ENCODE measurements at regions of chr19 and their contacts with region 1.

Region 1: GRCh38 chr19:40662921-40663694 is 27.3 kb downstream of the NUMBL start:
- DNase-seq: peak; percentile 92
- CTCF ChIP-seq: peak; percentile 99

Region 2: DNA sequence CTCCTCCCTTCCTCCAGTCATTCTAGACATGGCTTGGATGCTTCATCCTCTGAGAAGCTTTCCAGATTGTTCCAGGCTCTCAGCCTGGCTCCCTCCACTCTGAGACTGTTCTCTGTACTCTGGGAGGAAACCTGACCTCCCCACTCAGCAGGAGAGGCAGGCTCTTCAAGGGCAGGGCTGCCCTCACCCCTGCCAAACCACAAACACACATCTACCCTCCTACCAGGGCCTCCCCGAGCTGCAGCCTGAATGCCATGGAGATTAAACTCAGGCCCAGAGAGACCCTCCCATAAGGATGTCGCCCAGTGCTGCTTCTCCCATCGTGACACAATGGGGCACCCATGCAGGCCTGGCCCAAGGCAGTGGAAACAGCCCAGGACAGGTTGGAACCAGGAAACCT is 11.2 kb after region 1 on chr19:
- CTCF ChIA-PET with region 1: interaction called, 14 read pairs
- POLR2A ChIA-PET with region 1: no interaction called
- DNase-seq: no peak
- CTCF ChIP-seq: no peak

Region 3: DNA sequence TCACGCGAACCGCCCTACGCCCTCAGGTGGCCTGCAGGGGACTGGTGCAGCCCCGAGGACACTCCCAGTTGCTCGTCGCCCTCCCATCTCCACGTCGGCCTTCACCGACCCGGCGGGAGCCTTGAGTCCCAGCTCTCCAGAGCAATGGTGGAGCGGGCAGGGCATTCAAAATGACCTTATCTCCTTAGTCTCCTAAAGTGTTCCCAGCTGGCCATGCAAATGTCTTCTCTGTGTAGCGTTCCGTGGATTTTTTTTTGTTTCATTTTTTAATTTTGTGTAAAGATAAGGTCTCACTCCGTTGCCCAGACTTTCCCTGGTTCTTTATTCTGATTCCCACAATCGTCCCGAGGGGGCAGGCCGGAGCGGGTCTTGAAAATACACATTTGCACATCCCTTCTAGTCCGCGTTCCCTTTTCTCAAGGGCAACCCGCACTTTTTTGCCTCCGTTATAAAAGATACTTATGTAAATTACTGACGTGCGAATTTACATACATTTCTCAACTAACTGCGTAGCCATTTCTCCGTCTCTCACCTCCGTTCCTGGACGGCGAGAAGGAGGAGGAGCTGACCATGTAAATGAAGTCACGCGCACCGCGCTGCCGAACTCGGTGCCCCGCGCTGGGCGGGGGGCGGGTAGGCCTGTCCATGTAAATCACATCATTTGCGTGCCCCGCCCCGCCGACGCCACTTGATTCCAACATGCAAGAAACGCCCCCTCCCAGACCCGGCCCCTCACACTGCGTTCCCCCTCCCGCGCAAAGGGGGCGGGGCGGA is 135.3 kb after region 1 on chr19:
- CTCF ChIA-PET with region 1: interaction called, 11 read pairs
- POLR2A ChIA-PET with region 1: no interaction called
- DNase-seq: peak; percentile 97
- CTCF ChIP-seq: peak; percentile 61

Region 4: DNA sequence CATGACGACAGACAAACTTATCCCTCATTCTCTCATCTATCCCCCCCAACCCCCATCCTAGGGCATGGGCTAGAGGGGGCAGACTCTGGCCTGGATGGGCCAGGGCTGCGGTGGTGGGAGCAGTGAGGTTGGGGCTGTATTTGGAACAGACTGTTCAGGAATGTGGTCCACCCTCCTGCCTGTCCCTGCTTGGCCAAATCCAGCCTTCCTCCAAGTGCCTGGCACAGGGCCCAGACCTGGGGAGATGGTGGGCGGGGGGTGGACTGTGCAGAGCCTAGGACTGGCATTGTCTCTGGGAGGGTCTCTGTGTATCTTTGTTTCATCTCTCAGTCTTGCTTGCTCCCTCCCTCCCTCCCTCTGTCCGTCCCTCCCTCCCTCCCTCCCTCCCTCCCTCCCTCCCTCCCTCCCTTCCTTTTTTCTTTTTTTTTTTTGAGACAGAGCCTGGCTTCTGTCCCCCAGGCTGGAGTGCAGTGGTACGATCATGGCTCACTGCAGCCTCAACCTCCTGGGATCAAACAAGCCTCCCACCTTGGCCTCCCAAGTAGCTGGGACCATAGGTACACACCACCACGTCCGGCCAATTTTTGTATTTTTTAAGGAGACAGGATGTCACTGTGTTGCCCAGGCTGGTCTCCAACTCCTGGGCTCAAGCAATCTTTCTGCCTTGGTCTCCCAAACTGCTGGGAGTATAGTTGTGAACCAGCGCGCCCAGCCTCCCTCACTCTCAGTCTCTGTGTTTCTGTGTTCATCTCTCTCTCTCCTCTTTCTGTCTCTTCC is 150.3 kb after region 1 on chr19:
- CTCF ChIA-PET with region 1: interaction called, 60 read pairs
- POLR2A ChIA-PET with region 1: no interaction called
- DNase-seq: no peak
- CTCF ChIP-seq: no peak

Region 5: DNA sequence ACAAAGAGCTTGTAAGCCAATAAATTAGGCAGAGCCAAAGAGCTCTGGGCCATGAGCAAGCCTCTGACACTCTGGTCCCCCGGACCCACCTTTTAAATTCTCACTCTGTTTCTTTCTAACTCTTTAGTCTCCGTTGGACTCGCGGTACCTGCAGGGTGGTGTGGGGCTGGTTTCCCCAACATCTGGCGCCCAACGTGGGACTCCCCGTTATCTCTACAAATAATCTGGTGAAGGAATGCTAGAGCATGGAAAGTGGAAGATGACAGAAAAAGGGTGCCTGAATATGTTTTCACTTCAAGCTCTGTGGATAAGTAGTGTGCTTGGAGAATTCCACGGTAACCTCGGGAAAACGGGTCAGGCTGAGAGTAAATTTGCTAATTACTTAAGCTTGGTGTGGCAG is 291.5 kb after region 1 on chr19:
- CTCF ChIA-PET with region 1: no interaction called
- POLR2A ChIA-PET with region 1: no interaction called
- DNase-seq: no peak
- CTCF ChIP-seq: no peak

Measured in GM10248 (cell line).